ENCODE measurements at regions of chr6 and their contacts with region 1.

Region 1: GRCh38 chr6:24855395-24856245 is 56.9 kb upstream of the ARMH2 start:
- DNase-seq: peak; percentile 67 to 68
- H3K4me3 ChIP-seq: no peak overlapping the region
- H3K27ac ChIP-seq: peak overlapping the region in 1 of 3 donors; percentile 6
- H3K4me1 ChIP-seq: peaks cover 23 to 57% of the 10 kb centered on the region in 2 donors
- H3K27me3 ChIP-seq: no peaks in the 10 kb centered on the region
- CTCF ChIP-seq: peak; percentile 79 to 93 (median 86)
- POLR2A ChIP-seq: no peak

Region 2: DNA sequence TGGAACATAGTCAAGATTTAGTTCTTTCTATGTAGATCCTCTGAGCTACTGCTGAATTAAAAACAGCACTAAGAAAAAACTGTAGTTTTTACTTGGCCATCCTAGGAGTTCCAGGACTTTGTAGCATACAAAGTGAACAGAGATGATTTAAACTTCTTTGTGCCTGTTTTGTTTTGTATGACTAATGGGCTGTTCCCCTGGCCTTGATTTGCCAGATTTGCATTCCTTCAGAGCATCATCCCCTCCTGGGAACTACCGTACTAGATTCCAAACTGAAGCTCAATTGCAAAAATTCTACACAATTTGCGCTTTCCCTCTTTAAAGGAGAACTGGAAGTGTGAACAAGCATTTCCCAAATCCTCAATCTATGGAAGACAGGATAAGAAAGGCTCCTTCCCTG is 165.7 kb before region 1 on chr6:
- intact Hi-C with region 1: no loop called
- DNase-seq: no peak
- H3K4me3 ChIP-seq: no peak overlapping the region
- H3K27ac ChIP-seq: no peak overlapping the region
- H3K4me1 ChIP-seq: no peaks in the 10 kb centered on the region
- H3K27me3 ChIP-seq: no peaks in the 10 kb centered on the region
- CTCF ChIP-seq: no peak
- POLR2A ChIP-seq: no peak

Region 3: GRCh38 chr6:24991810-24992467 is 136.3 kb after region 1 on chr6:
- intact Hi-C with region 1: loop called (anchors 10 kb)
- DNase-seq: peak; percentile 48 to 58
- H3K4me3 ChIP-seq: no peak overlapping the region
- H3K27ac ChIP-seq: no peak overlapping the region
- H3K4me1 ChIP-seq: no peaks in the 10 kb centered on the region
- H3K27me3 ChIP-seq: no peaks in the 10 kb centered on the region
- CTCF ChIP-seq: peak; percentile 39 to 89 (median 70)
- POLR2A ChIP-seq: no peak

Region 4: DNA sequence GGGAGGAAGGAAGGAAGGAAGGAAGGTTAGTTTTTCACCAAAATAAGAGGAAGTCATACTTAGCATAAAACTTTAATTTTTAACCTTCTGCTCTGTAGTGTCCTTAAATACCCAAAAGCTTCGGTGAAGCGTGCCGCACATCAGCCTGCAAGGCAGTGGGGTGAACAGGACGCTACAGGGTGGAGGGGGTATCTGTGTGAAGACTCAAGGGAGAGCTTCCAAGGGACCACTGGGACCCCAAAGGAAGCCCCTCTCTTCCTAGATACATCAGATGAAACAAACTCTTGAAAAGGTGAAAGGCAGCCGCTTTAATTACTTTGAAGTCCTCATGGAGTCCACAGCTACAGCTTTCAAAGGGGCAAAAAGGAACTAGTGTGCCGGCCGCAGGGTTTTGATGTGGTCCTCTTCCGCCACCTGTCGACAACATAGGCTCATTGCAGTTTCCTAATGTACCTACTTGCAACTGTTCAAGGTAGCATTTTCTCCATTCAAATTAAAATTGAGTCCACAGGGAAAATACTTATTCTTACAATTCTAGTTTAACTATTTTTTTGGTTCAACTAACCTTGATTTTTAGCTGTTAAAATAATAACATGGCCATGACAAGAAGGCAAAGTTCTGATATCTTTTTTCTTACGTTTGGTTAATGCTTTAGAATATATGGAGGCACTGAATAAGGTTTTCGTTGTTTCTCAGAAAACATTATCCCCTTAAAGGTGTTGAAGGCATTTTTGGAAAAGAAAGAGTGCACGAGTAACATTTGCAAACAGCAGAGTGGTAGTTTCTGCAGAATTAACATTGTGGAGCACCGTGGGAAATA is 215.1 kb after region 1 on chr6:
- intact Hi-C with region 1: loop called (anchors 5 kb)
- DNase-seq: peak; percentile 85 to 86
- H3K4me3 ChIP-seq: no peak overlapping the region
- H3K27ac ChIP-seq: no peak overlapping the region
- H3K4me1 ChIP-seq: no peaks in the 10 kb centered on the region
- H3K27me3 ChIP-seq: no peaks in the 10 kb centered on the region
- CTCF ChIP-seq: peak; percentile 82 to 92 (median 91)
- POLR2A ChIP-seq: no peak

Region 5: DNA sequence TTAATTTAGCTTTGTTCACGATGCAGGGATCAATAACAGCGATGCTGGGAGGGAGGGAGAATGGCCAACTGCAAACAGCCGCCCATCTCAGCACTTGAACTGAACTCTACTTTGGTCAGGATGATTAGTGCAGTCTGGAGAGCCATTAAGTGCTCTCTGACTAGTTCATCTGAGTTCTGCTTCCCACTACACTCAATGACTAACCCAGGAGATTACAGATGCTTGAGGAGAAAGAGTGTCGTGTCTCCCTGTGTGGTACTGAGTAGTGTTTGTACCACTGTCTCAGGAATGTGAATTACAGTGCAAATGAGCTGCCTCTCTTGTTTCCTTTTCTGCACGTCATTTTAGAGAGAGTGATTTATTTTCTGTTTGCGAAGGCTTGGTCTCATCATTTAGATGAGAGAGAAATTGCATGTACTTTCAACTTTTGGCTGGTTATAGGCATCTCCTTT is 447.1 kb after region 1 on chr6:
- intact Hi-C with region 1: no loop called
- DNase-seq: no peak
- H3K4me3 ChIP-seq: no peak overlapping the region
- H3K27ac ChIP-seq: peak overlapping the region in 1 of 3 donors; percentile 11
- H3K4me1 ChIP-seq: peaks cover 7 to 37% of the 10 kb centered on the region in 2 donors
- H3K27me3 ChIP-seq: no peaks in the 10 kb centered on the region
- CTCF ChIP-seq: no peak
- POLR2A ChIP-seq: no peak